ENCODE measurements at regions of chr22 and their contacts with region 1.

Region 1: GRCh38 chr22:38766076-38766777 is 10.4 kb upstream of the SUN2 start:
- H3K4me3 ChIP-seq: no peak overlapping the region
- H3K27ac ChIP-seq: no peak overlapping the region
- H3K4me1 ChIP-seq: no peaks in the 10 kb centered on the region
- CTCF ChIP-seq: peak; percentile 73

Region 2: DNA sequence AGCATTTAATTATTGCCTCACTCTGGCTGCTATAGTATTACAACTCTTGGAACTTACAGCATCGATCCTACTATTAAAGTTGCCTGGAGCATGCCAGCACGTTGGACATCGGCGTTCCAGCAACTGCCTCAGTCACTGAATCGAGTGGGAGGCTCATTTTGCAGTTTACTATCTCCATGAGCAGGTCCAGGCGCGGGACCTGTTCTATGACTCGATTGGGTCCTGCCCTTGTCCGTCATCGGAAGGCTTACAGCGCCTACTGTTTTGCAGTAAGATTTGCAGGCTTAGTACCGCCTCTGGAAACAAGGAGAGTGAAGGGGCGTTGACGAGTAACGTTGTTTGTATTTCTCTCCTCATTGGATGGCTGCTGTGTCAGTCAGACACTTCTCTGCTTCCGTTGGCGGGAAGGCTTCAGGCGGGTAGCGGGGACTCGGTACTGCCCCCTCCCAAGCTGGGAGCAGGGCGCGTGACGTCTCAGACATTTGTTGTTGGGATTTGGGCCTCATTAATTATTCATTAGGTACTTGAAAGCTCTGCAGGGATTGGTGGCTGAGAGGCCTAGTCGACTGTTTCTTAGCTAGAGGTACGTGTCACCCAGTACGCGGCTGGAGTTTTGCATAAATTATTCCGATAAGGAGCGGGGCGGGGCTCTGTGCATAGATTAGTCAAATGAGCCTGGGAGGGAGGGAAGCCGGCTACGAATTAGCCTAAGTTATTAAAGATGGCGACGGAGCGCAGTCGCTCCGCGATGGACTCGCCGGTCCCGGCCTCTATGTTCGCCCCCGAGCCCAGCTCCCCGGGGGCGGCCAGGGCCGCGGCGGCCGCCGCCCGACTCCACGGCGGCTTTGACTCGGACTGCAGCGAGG is 60.8 kb before region 1 on chr22 and contains the start of gene GTPBP1:
- CTCF ChIA-PET with region 1: no interaction called
- POLR2A ChIA-PET with region 1: no interaction called
- H3K4me3 ChIP-seq: peak within 1 kb of the TSS; percentile 92
- H3K27ac ChIP-seq: peak within 1 kb of the TSS; percentile 94
- H3K4me1 ChIP-seq: peaks cover 13% of the 10 kb centered on the region
- CTCF ChIP-seq: peak; percentile 78

Region 3: DNA sequence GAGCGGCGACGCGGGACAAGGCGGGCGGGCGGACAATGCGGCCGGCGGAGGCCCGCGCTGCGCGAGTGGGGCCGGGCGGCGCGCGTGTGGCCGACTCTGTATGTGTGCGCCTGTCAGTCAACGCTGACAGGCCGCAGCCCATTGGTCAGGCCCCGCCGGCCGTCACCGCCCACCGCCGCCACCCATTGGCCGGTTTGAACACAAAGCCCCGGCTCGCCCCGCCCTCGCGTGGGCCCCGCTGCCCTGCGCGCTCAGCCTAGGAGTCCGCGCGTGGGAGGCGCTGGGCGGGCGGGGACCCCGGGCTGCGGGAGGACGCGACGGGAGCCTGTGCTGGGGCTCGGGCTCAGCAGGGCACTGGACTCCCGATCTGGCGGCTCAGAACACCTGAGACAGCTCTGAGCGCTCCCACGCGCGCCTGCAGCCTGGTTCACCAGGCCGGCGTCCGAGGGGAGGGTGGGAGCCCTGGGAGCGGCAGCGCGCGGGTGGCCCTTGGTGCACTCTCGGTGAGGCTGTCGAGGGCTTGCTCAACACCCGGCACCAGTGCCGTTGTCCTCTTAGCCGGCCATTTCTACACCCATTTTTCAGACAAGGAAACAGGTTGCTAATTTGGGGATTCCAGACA is 10.2 kb before region 1 on chr22 and contains the start of gene SUN2:
- CTCF ChIA-PET with region 1: interaction called, 48 read pairs
- POLR2A ChIA-PET with region 1: interaction called, 8 read pairs
- H3K4me3 ChIP-seq: peak within 1 kb of the TSS; percentile 71
- H3K27ac ChIP-seq: peak within 1 kb of the TSS; percentile 97
- H3K4me1 ChIP-seq: peaks cover 9% of the 10 kb centered on the region
- CTCF ChIP-seq: no peak

Region 4: GRCh38 chr22:38788846-38789245 is 22.6 kb after region 1 on chr22:
- CTCF ChIA-PET with region 1: interaction called, 43 read pairs
- POLR2A ChIA-PET with region 1: interaction called, 3 read pairs
- H3K4me3 ChIP-seq: no peak overlapping the region
- H3K27ac ChIP-seq: no peak overlapping the region
- H3K4me1 ChIP-seq: peaks cover 4% of the 10 kb centered on the region; the same call in 1 of the 2 replicates
- CTCF ChIP-seq: no peak

Region 5: GRCh38 chr22:38837414-38837928 is 71.2 kb after region 1 on chr22:
- CTCF ChIA-PET with region 1: interaction called, 38 read pairs
- POLR2A ChIA-PET with region 1: no interaction called
- H3K4me3 ChIP-seq: no peak overlapping the region
- H3K27ac ChIP-seq: no peak overlapping the region
- H3K4me1 ChIP-seq: 0 out of 2 replicates have a peak, but pooled peaks cover 2% of the 10 kb centered on the region
- CTCF ChIP-seq: no peak

Region 6: GRCh38 chr22:38862375-38863329 is 96.4 kb after region 1 on chr22:
- CTCF ChIA-PET with region 1: interaction called, 17 read pairs
- POLR2A ChIA-PET with region 1: interaction called, 18 read pairs
- H3K4me3 ChIP-seq: no peak overlapping the region
- H3K27ac ChIP-seq: no peak overlapping the region
- H3K4me1 ChIP-seq: no peaks in the 10 kb centered on the region
- CTCF ChIP-seq: no peak

Region 7: GRCh38 chr22:39117585-39118191 is 351.5 kb after region 1 on chr22:
- CTCF ChIA-PET with region 1: interaction called, 12 read pairs
- POLR2A ChIA-PET with region 1: no interaction called
- H3K4me3 ChIP-seq: no peak overlapping the region
- H3K27ac ChIP-seq: no peak overlapping the region
- H3K4me1 ChIP-seq: no peaks in the 10 kb centered on the region
- CTCF ChIP-seq: no peak